A549 (cell line): ENCODE measurements at regions of chr12 and their contacts with region 1.

Region 1: DNA sequence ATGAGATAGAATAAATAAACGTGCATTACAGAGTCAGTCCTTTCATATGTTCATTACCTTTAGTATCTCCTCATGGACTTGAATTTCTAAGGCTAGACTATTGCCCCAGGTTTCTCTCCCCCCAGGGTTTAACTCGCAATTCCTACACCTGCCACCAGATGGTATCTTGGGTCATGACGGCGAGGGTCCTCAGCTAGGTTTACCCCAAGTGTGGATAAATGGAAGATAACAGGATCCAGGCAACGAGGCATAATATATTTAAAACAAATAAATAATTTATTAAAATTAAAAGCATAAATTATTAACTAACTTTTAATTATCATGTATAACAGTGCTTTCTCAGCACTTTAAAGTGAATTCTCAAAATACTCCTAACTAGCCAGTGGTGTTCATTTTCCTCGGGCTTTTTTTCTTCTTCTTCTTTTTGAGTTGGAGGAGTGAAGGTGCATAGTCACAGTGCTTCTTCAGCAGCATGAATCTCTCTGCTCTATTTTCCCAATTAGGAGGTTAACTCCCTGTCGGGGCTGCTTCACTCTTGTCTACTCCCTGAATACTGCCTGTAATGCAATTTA is 243.5 kb upstream of the CAND1 start:
- DNase-seq: peak; percentile 45 to 71
- ATAC-seq: peak; percentile 76 to 80; a peak in 5 of 6 replicates
- H3K4me3 ChIP-seq: no peak overlapping the region
- H3K27ac ChIP-seq: no peak overlapping the region
- H3K4me1 ChIP-seq: no peaks in the 10 kb centered on the region
- CTCF ChIP-seq: peak; percentile 70
- EP300 ChIP-seq: no peak
- POLR2A ChIP-seq: no peak
- RAD21 ChIP-seq: peak; percentile 66 to 69

Region 2: GRCh38 chr12:67068761-67069450 is 43.3 kb after region 1 on chr12:
- CTCF ChIA-PET with region 1: interaction called, 10 read pairs
- POLR2A ChIA-PET with region 1: no interaction called
- DNase-seq: peak; percentile 37 to 67
- ATAC-seq: peak; percentile 80 to 81
- H3K4me3 ChIP-seq: peak overlapping the region; percentile 75
- H3K27ac ChIP-seq: peak overlapping the region; percentile 89 to 91
- H3K4me1 ChIP-seq: peaks cover 13% of the 10 kb centered on the region
- CTCF ChIP-seq: no peak
- EP300 ChIP-seq: no peak
- POLR2A ChIP-seq: peak; percentile 45
- RAD21 ChIP-seq: no peak

Region 3: GRCh38 chr12:67220065-67220464 is 194.4 kb after region 1 on chr12:
- CTCF ChIA-PET with region 1: interaction called, 10 read pairs
- POLR2A ChIA-PET with region 1: no interaction called
- DNase-seq: peak in 1 of 2 experiments; percentile 41
- ATAC-seq: peak in 1 of 2 experiments; percentile 61; a peak in 3 of 6 replicates
- H3K4me3 ChIP-seq: no peak overlapping the region
- H3K27ac ChIP-seq: no peak overlapping the region
- H3K4me1 ChIP-seq: no peaks in the 10 kb centered on the region
- CTCF ChIP-seq: peak; percentile 28
- EP300 ChIP-seq: no peak
- POLR2A ChIP-seq: no peak
- RAD21 ChIP-seq: peak; percentile 27 to 42; a peak in 2 of 5 replicates